CD4-positive, alpha-beta T cell (primary cell): ENCODE measurements at regions of chrX and their contacts with region 1.

Region 1: DNA sequence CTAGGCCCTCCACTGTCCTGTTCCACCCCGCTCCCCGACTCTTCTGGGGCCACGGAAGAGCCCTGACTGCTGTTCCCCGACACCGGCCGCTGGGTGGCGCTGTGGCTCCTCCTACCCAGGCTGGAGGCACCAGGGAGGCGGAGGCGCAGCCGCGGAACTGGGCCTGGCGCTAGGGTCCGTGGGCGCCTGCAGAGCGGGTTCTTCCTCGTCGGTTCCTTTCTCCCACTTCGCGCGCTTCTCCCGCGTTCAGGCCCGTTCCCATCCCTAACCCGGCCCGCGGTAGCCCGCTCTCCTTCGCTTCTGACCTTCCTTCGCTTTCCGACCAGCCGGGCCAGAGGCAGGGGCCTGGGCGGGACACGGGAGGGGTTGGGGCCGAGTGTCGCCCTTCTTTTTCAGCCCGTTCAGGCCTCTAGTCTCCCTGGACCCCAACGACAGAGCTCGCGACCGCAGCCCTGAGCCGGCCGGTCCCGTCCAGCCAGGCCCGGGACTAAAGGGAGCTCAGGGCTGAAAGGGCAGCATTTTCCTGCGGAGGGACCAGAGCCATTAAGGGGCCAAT is 34.3 kb downstream of the NALF2 start:
- DNase-seq: peak; percentile 29 to 79 (median 70)
- ATAC-seq: peak; percentile 71
- H3K4me3 ChIP-seq: peak overlapping the region; percentile 46
- H3K4me3 Mint-ChIP-seq: no peak overlapping the region
- H3K27ac ChIP-seq: no peak overlapping the region
- H3K27ac Mint-ChIP-seq: no peak overlapping the region
- H3K4me1 ChIP-seq: peaks cover 15% of the 10 kb centered on the region
- H3K4me1 Mint-ChIP-seq: peaks cover 7% of the 10 kb centered on the region
- H3K27me3 ChIP-seq: no peaks in the 10 kb centered on the region
- H3K27me3 Mint-ChIP-seq: peaks cover 12% of the 10 kb centered on the region
- CTCF ChIP-seq: peak; percentile 45

Region 2: DNA sequence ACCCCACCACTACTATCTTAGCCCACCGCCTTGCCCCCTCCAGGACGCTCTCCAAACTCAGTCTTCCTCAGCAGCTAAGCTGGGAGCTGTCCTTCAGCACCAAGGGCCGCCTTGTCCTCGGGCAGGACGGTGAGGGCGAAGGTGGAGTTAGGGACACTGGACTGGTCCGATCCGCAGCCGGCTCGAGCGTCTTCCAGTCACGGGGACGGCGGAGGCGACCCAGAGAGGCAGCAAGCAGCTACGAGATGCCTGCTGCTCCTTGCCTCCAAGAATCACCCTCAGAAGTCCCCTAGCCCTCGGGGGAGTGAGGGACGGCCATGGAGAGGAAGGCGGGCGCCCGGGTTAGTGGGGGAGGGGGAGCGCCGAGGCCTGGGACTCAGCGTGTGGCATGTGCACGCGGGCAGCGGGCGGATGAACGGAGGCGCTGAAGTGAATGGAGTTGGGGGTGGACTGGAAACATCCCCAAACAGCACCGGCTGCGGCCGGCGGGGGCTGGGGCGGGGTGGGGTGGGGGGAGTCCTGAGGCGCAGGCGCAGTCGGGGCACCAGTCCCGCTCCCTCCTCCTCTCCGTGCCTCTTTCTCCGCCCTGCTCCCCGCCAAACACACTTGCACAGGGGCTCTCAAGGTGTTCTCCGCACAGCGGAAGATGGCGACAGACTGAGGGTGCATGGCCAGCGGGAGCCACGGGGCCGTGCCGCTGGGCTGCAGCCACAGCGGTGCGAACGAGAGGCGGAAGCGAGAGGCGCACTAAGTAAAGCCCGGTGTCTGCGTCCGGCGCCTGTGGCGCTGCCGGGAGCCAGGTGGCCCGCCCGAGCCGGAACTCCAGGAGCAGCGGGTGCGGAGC is 34.4 kb before region 1 on chrX and contains the start of gene NALF2:
- CTCF ChIA-PET with region 1: no interaction called
- POLR2A ChIA-PET with region 1: no interaction called
- intact Hi-C with region 1: no loop called
- DNase-seq: peak in 6 of 14 experiments; percentile 14 to 31 (median 20)
- ATAC-seq: no peak
- H3K4me3 ChIP-seq: peak within 1 kb of the TSS; percentile 22
- H3K4me3 Mint-ChIP-seq: no peak within 1 kb of the TSS
- H3K27ac ChIP-seq: no peak within 1 kb of the TSS
- H3K27ac Mint-ChIP-seq: no peak within 1 kb of the TSS
- H3K4me1 ChIP-seq: peaks cover 3% of the 10 kb centered on the region
- H3K4me1 Mint-ChIP-seq: no peaks in the 10 kb centered on the region
- H3K27me3 ChIP-seq: peaks cover 3 to 12% of the 10 kb centered on the region in 2 experiments
- H3K27me3 Mint-ChIP-seq: peaks cover 27% of the 10 kb centered on the region
- CTCF ChIP-seq: no peak
- total RNA-seq, gene NALF2: not detected

Region 3: GRCh38 chrX:70030301-70030767 is 491.9 kb after region 1 on chrX:
- CTCF ChIA-PET with region 1: no interaction called
- POLR2A ChIA-PET with region 1: no interaction called
- intact Hi-C with region 1: loop called in 1 of 2 experiments (anchors 5 kb)
- DNase-seq: peak in 11 of 14 experiments; percentile 5 to 62 (median 27)
- ATAC-seq: no peak
- H3K4me3 ChIP-seq: no peak overlapping the region
- H3K4me3 Mint-ChIP-seq: no peak overlapping the region
- H3K27ac ChIP-seq: no peak overlapping the region
- H3K27ac Mint-ChIP-seq: no peak overlapping the region
- H3K4me1 ChIP-seq: peaks cover 17% of the 10 kb centered on the region
- H3K4me1 Mint-ChIP-seq: peaks cover 19% of the 10 kb centered on the region
- H3K27me3 ChIP-seq: no peaks in the 10 kb centered on the region
- H3K27me3 Mint-ChIP-seq: no peaks in the 10 kb centered on the region
- CTCF ChIP-seq: peak; percentile 35